Adrenal gland (tissue), 19 donors: ENCODE measurements at regions of chr6 and their contacts with region 1.

Region 1: GRCh38 chr6:107114213-107114905 is 956 bp downstream of the BEND3 start:
- DNase-seq: peak; percentile 86 to 92 (median 89)
- H3K4me3 ChIP-seq: peak overlapping the region in 2 of 4 donors; percentile 56 to 94
- H3K27ac ChIP-seq: peak overlapping the region in 3 of 5 donors; percentile 62 to 82 (median 67)
- H3K4me1 ChIP-seq: peaks cover 0 to 17% of the 10 kb centered on the region in 2 donors
- H3K27me3 ChIP-seq: no peaks in the 10 kb centered on the region
- CTCF ChIP-seq: peak; percentile 21 to 98 (median 66)
- POLR2A ChIP-seq: no peak

Region 2: GRCh38 chr6:107026965-107027364 is 87.4 kb before region 1 on chr6:
- intact Hi-C with region 1: loop called (anchors 5 to 10 kb)
- DNase-seq: no peak
- H3K4me3 ChIP-seq: no peak overlapping the region
- H3K27ac ChIP-seq: no peak overlapping the region
- H3K4me1 ChIP-seq: peaks cover 11 to 26% of the 10 kb centered on the region in 2 donors
- H3K27me3 ChIP-seq: no peaks in the 10 kb centered on the region
- CTCF ChIP-seq: no peak
- POLR2A ChIP-seq: no peak

Region 3: DNA sequence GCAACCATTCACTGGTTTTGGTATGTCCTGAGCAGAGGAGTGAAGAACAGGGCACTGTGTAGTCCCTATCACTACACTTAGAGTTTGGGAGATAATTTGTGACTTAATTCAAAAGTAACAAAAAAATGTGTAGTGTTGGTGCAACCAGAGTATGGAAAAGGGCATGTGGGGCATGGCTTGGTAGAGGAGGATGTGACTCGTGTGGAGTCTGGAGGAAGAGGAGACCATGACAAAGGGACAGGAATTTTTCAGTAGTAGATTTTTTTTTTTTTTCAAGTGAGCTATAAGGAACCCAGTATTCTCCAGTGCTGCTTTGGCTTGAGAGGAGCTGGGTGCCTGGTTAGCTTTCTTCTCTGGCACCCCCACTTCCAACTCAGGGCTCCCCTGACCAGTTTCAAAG is 81.2 kb before region 1 on chr6:
- intact Hi-C with region 1: loop called (anchors 5 to 10 kb)
- DNase-seq: no peak
- H3K4me3 ChIP-seq: no peak overlapping the region
- H3K27ac ChIP-seq: peak overlapping the region in 1 of 5 donors; percentile 36
- H3K4me1 ChIP-seq: peaks cover 10 to 22% of the 10 kb centered on the region in 2 donors
- H3K27me3 ChIP-seq: no peaks in the 10 kb centered on the region
- CTCF ChIP-seq: no peak
- POLR2A ChIP-seq: no peak

Region 4: DNA sequence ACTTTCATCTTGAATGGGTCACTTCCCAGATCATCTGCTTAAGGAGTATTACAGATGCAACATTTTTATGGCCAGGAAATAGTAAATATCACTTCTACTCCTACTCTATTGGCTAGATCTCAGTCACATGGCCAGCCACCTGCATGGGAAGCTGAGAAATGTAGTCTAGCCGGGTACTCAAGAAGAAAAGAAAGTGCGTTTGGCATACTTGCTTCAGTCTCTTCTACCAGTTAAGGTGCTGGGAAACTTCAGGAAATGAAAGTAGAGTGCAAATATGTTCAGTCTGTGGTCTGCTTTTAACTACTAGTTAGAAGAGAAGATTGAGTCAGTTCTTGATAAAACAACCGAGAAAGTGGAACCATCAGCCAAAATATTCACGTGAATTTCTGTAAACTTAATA is 215.8 kb after region 1 on chr6:
- intact Hi-C with region 1: no loop called
- DNase-seq: no peak
- H3K4me3 ChIP-seq: no peak overlapping the region
- H3K27ac ChIP-seq: no peak overlapping the region
- H3K4me1 ChIP-seq: peaks cover 0 to 4% of the 10 kb centered on the region in 2 donors
- H3K27me3 ChIP-seq: no peaks in the 10 kb centered on the region
- CTCF ChIP-seq: no peak
- POLR2A ChIP-seq: no peak